ENCODE measurements at regions of chr1 and their contacts with region 1.

Region 1: DNA sequence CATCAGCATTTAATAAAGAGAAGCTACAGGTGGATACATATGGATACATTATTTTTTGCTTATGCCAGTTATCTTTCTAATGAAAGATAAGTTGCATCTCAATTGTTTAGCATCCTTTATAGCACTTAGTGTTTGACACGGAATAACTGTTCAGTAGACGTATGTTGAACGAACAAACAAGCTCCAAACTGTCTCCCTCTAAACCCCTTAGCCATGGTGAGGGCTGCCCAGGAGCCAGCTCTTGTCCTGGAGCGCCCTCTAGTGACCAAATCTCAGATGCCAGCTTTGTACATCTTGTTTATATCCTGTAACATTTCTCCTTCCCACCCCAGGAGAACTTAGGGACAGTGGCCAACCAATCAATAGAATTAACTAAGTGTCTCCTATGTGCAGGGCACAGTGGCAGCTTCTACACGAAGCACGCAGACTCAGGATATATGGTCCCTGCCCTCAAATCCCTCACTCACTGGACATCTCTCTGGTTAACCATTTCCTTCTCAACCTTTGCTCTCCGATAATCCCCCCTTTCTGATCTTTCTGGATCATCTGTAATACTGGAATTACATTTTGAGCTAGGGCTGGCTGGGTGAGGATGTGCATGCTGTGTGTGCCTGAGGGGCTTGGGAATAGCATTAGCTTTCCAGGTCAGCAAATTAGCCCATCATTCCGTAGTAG is 22.9 kb downstream of the KCNA10 start:
- DNase-seq: peak; percentile 81 to 90 (median 85)
- H3K4me3 ChIP-seq: no peak overlapping the region
- H3K27ac ChIP-seq: no peak overlapping the region
- H3K4me1 ChIP-seq: peaks cover 3 to 28% (median 23%) of the 10 kb centered on the region in 4 experiments
- H3K27me3 ChIP-seq: no peaks in the 10 kb centered on the region

Region 2: GRCh38 chr1:110203021-110203661 is 292.9 kb before region 1 on chr1:
- CTCF ChIA-PET with region 1: interaction called, 52 read pairs
- POLR2A ChIA-PET with region 1: interaction called, 5 read pairs
- DNase-seq: peak; percentile 76 to 89 (median 82)
- H3K4me3 ChIP-seq: no peak overlapping the region
- H3K27ac ChIP-seq: no peak overlapping the region
- H3K4me1 ChIP-seq: no peaks in the 10 kb centered on the region
- H3K27me3 ChIP-seq: no peaks in the 10 kb centered on the region

Region 3: DNA sequence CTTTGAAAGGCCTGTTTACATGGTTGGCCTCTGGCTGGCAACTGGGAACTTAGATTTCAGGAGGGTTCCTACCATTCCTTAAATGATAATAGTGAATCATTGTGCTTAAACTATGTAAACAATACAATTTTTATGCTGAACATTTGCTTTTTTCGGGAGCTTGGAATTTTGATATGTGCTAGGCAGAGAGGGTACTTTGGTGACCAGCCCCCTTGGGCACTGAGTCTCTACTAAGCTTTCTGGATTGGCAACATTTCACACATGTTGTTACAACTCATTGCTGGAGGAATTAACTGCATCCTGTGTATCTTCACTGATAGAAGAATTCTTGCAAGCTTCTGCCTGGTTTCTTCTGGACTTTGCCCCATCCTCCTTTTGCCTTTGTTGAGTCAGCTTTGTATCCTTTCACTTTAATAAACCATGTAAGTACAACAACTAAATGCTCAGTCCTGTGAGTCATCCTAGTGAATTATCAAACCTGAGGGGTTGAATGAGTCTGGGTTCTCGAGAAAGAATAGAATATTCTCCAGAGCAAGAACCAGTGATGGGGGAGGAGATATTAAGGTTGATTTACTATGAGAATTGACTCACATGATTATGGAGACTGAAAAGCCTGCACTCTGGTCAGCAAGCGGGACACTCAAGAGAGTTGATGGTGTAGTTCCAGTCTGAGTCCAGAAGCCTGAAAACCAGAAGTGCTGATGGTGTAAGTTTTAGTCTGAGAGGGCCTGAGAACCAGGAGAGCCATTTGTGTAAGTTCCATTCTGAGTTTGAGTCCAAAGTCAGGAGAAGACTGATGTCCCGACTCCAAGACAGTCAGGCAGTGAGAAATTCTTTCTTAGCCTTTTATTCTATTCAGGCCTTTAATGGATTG is 102.1 kb before region 1 on chr1:
- CTCF ChIA-PET with region 1: no interaction called
- POLR2A ChIA-PET with region 1: no interaction called
- DNase-seq: no peak
- H3K4me3 ChIP-seq: no peak overlapping the region
- H3K27ac ChIP-seq: no peak overlapping the region
- H3K4me1 ChIP-seq: no peaks in the 10 kb centered on the region
- H3K27me3 ChIP-seq: no peaks in the 10 kb centered on the region

Region 4: GRCh38 chr1:110460253-110461220 is 35.5 kb before region 1 on chr1:
- CTCF ChIA-PET with region 1: interaction called, 96 read pairs
- POLR2A ChIA-PET with region 1: no interaction called
- DNase-seq: peak; percentile 78 to 91 (median 86)
- H3K4me3 ChIP-seq: no peak overlapping the region
- H3K27ac ChIP-seq: no peak overlapping the region
- H3K4me1 ChIP-seq: no peaks in the 10 kb centered on the region
- H3K27me3 ChIP-seq: peaks cover 0 to 2% (median 0%) of the 10 kb centered on the region in 5 experiments

Region 5: DNA sequence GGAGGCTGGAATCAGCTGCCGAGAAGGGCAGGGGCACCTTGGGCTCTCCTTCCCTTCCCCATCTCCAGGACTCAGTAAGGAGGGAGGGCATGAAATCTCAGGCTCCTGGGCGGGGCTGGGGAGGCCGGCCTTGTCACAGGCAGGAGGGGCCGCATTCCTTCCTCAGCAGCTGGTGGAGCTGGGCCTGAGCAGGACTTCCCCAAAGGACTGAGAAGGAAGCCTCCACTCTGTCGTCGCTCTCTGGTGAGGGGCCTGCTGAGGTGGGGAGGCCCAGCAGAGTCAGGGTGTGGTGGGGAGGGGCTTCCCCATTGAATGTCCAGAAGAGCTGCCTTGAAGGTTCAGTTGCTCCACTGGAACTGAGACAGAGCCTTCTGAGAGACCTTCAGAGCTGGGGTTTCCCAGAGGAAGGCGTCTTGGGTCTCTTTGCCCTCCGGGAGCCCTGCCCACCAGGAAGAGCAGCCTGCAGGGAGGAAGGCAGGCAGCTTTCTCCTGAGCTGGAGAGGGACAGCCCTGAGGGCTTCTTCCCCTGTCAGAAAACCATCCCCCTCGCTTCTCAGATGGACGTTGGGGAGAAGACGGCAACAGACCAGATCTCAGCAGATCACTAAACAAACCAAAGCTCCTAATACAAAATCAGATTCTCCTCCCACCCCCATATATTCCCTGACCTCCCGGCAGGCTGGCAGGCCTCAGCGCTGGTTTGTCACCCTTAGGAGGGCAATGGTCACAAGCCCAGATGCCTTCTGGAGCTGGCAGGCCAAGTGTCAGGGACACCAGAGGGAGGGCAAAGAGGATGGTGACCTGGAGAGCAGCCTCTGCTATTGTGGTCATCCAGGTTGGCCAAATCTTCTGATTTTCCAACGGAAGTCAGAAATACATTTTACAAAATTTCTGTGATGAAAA is 12.2 kb after region 1 on chr1:
- CTCF ChIA-PET with region 1: interaction called, 12 read pairs
- POLR2A ChIA-PET with region 1: no interaction called
- DNase-seq: peak in 2 of 3 donors; percentile 31 to 41
- H3K4me3 ChIP-seq: no peak overlapping the region
- H3K27ac ChIP-seq: no peak overlapping the region
- H3K4me1 ChIP-seq: peaks cover 0 to 5% (median 2%) of the 10 kb centered on the region in 4 experiments
- H3K27me3 ChIP-seq: no peaks in the 10 kb centered on the region

Region 6: GRCh38 chr1:110524311-110525251 is 28.5 kb after region 1 on chr1:
- CTCF ChIA-PET with region 1: interaction called, 21 read pairs
- POLR2A ChIA-PET with region 1: no interaction called
- DNase-seq: peak; percentile 70 to 82 (median 79)
- H3K4me3 ChIP-seq: peak overlapping the region in 1 of 7 experiments; percentile 3
- H3K27ac ChIP-seq: no peak overlapping the region
- H3K4me1 ChIP-seq: peaks cover 0 to 6% (median 2%) of the 10 kb centered on the region in 4 experiments
- H3K27me3 ChIP-seq: peaks cover 0 to 30% (median 14%) of the 10 kb centered on the region in 5 experiments